Psoas muscle (tissue), 8 donors: ENCODE measurements at regions of chr10 and their contacts with region 1.

Region 1: DNA sequence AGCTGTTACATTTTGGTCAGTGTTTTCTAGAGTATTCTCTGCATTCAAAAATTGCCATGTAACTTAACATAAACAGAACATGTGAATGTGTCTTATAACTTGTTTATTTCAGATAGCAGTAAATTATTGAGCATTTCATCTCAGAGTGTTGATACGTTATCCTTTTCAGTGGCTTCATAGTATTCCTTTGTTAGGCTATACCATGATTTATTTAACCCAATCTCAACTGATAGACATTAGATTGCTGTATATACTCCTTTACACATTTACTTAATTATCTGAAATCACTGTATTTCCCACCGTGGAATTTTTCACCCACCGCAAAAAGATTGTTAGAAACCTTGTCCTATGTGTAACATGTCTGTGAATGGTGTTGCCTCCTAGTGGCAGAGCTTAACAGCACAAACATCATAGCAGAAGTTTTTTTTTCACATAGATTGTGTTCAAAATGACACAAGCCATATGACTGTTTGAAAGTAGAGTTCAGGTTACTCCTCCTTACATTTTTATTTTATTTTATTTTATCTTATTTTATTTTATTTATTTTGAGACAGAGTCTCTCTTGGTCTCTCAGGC is 21.4 kb downstream of the SLF2 start:
- DNase-seq: no peak
- ATAC-seq: no peak
- H3K4me3 ChIP-seq: no peak overlapping the region
- H3K27ac ChIP-seq: no peak overlapping the region
- H3K4me1 ChIP-seq: peaks cover 18% of the 10 kb centered on the region
- H3K27me3 ChIP-seq: no peaks in the 10 kb centered on the region
- CTCF ChIP-seq: peak; percentile 11

Region 2: DNA sequence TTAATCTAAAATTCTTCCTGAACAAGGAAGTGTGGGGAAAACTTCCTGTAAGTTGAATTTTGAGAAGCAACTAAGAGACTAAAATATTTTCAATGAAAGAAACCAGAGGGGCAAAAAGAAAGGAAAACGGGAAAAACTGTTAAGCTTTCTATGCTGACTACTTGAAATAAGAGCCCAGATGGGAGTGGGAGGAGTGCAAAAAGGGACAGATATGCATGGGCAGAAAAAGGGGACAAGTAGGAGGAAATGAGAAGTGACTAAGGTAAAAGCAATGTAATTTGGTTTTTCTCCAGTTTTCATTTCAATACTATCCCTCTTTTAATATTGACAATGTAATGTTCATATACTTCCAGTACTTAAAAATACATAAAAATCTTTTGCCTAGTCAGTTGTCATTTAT is 873.0 kb after region 1 on chr10:
- intact Hi-C with region 1: loop called in 1 of 2 experiments (anchors 10 kb)
- DNase-seq: no peak
- ATAC-seq: no peak
- H3K4me3 ChIP-seq: no peak overlapping the region
- H3K27ac ChIP-seq: no peak overlapping the region
- H3K4me1 ChIP-seq: peaks cover 6% of the 10 kb centered on the region
- H3K27me3 ChIP-seq: no peaks in the 10 kb centered on the region
- CTCF ChIP-seq: no peak